ENCODE measurements at regions of chr3 and their contacts with region 1.

Region 1: GRCh38 chr3:114179575-114179974 is 723 bp upstream of the DRD3 start:
- DNase-seq: peak; percentile 46
- ATAC-seq: peak; percentile 65
- H3K4me3 ChIP-seq: no peak overlapping the region
- H3K4me3 Mint-ChIP-seq: no peak overlapping the region
- H3K27ac ChIP-seq: no peak overlapping the region
- H3K27ac Mint-ChIP-seq: no peak overlapping the region
- H3K4me1 ChIP-seq: no peaks in the 10 kb centered on the region
- H3K4me1 Mint-ChIP-seq: peaks cover 2% of the 10 kb centered on the region
- H3K27me3 ChIP-seq: peaks cover 0 to 2% (median 0%) of the 10 kb centered on the region in 4 experiments
- H3K27me3 Mint-ChIP-seq: peaks cover 23% of the 10 kb centered on the region
- CTCF ChIP-seq: peak; percentile 40

Region 2: GRCh38 chr3:114205541-114205940 is 26.0 kb after region 1 on chr3:
- CTCF ChIA-PET with region 1: no interaction called
- POLR2A ChIA-PET with region 1: no interaction called
- intact Hi-C with region 1: loop called (anchors 2 kb)
- DNase-seq: no peak
- ATAC-seq: no peak
- H3K4me3 ChIP-seq: no peak overlapping the region
- H3K4me3 Mint-ChIP-seq: no peak overlapping the region
- H3K27ac ChIP-seq: no peak overlapping the region
- H3K27ac Mint-ChIP-seq: no peak overlapping the region
- H3K4me1 ChIP-seq: peaks cover 7 to 11% of the 10 kb centered on the region in 2 donors
- H3K4me1 Mint-ChIP-seq: peaks cover 16% of the 10 kb centered on the region
- H3K27me3 ChIP-seq: no peaks in the 10 kb centered on the region
- H3K27me3 Mint-ChIP-seq: no peaks in the 10 kb centered on the region
- CTCF ChIP-seq: no peak

Region 3: GRCh38 chr3:114527036-114527644 is 347.6 kb after region 1 on chr3:
- CTCF ChIA-PET with region 1: no interaction called
- POLR2A ChIA-PET with region 1: no interaction called
- intact Hi-C with region 1: no loop called
- DNase-seq: no peak
- ATAC-seq: no peak
- H3K4me3 ChIP-seq: no peak overlapping the region
- H3K4me3 Mint-ChIP-seq: no peak overlapping the region
- H3K27ac ChIP-seq: no peak overlapping the region
- H3K27ac Mint-ChIP-seq: no peak overlapping the region
- H3K4me1 ChIP-seq: no peaks in the 10 kb centered on the region
- H3K4me1 Mint-ChIP-seq: peaks cover 1% of the 10 kb centered on the region
- H3K27me3 ChIP-seq: no peaks in the 10 kb centered on the region
- H3K27me3 Mint-ChIP-seq: no peaks in the 10 kb centered on the region
- CTCF ChIP-seq: peak; percentile 44

Measured in B cell (primary cell).